Endothelial cell of umbilical vein (primary cell): ENCODE measurements at regions of chr9 and their contacts with region 1.

Region 1: DNA sequence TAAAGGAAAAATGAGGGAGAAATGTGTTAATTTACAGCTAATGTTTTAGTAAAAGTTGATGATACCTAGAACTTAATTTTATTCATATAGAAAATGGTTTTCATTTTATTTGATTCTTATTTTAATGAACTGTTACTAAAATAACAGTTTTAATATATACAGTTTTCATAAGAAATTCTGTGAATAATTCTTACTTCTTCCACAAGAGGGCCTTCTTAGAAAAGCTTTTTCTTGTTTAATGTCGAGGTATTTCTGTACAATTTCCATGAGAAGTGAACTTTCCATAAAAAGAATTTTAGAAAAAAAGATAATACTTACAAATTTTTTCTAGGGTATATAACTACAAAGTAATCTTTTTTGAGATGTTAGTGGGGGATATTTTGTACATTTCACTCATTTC is 73.9 kb downstream of the KLF9 start:
- DNase-seq: peak; percentile 40
- H3K4me3 ChIP-seq: no peak overlapping the region
- H3K27ac ChIP-seq: no peak overlapping the region
- H3K4me1 ChIP-seq: no peaks in the 10 kb centered on the region
- H3K27me3 ChIP-seq: no peaks in the 10 kb centered on the region
- CTCF ChIP-seq: peak in 1 of 2 donors; percentile 4
- POLR2A ChIP-seq: no peak

Region 2: GRCh38 chr9:70120834-70121510 is 219.6 kb before region 1 on chr9:
- CTCF ChIA-PET with region 1: no interaction called
- POLR2A ChIA-PET with region 1: no interaction called
- dilution Hi-C with region 1: no loop called
- intact Hi-C with region 1: no loop called
- DNase-seq: peak; percentile 58
- H3K4me3 ChIP-seq: no peak overlapping the region
- H3K27ac ChIP-seq: no peak overlapping the region
- H3K4me1 ChIP-seq: no peaks in the 10 kb centered on the region
- H3K27me3 ChIP-seq: no peaks in the 10 kb centered on the region
- CTCF ChIP-seq: peak in 1 of 2 donors; percentile 2
- POLR2A ChIP-seq: no peak

Region 3: GRCh38 chr9:70392189-70392588 is 51.6 kb after region 1 on chr9:
- CTCF ChIA-PET with region 1: interaction called, 14 read pairs
- POLR2A ChIA-PET with region 1: no interaction called
- dilution Hi-C with region 1: no loop called
- intact Hi-C with region 1: loop called (anchors 5 kb)
- DNase-seq: peak; percentile 12
- H3K4me3 ChIP-seq: no peak overlapping the region
- H3K27ac ChIP-seq: no peak overlapping the region
- H3K4me1 ChIP-seq: peaks cover 32% of the 10 kb centered on the region
- H3K27me3 ChIP-seq: no peaks in the 10 kb centered on the region
- CTCF ChIP-seq: peak in 1 of 2 donors; percentile 15
- POLR2A ChIP-seq: no peak

Region 4: GRCh38 chr9:70510157-70510770 is 169.7 kb after region 1 on chr9:
- CTCF ChIA-PET with region 1: interaction called, 13 read pairs
- POLR2A ChIA-PET with region 1: no interaction called
- dilution Hi-C with region 1: no loop called
- intact Hi-C with region 1: loop called (anchors 1 kb)
- DNase-seq: peak; percentile 46
- H3K4me3 ChIP-seq: no peak overlapping the region
- H3K27ac ChIP-seq: no peak overlapping the region
- H3K4me1 ChIP-seq: no peaks in the 10 kb centered on the region
- H3K27me3 ChIP-seq: no peaks in the 10 kb centered on the region
- CTCF ChIP-seq: peak; percentile 64 to 68
- POLR2A ChIP-seq: no peak